ENCODE measurements at regions of chr5 and their contacts with region 1.

Region 1: GRCh38 chr5:1436681-1437080 is 8.6 kb downstream of the SLC6A3 start:
- DNase-seq: no peak
- H3K4me3 ChIP-seq: no peak overlapping the region
- H3K27ac ChIP-seq: no peak overlapping the region
- H3K4me1 ChIP-seq: no peaks in the 10 kb centered on the region
- H3K27me3 ChIP-seq: peaks cover 0 to 40% of the 10 kb centered on the region in 2 donors
- CTCF ChIP-seq: no peak
- POLR2A ChIP-seq: no peak

Region 2: GRCh38 chr5:1417586-1418225 is 19.0 kb before region 1 on chr5:
- intact Hi-C with region 1: loop called (anchors 1 kb)
- DNase-seq: no peak
- H3K4me3 ChIP-seq: no peak overlapping the region
- H3K27ac ChIP-seq: no peak overlapping the region
- H3K4me1 ChIP-seq: no peaks in the 10 kb centered on the region
- H3K27me3 ChIP-seq: peaks cover 0 to 17% of the 10 kb centered on the region in 2 donors
- CTCF ChIP-seq: no peak
- POLR2A ChIP-seq: no peak